HepG2 (cell line): ENCODE measurements at regions of chr16 and their contacts with region 1.

Region 1: DNA sequence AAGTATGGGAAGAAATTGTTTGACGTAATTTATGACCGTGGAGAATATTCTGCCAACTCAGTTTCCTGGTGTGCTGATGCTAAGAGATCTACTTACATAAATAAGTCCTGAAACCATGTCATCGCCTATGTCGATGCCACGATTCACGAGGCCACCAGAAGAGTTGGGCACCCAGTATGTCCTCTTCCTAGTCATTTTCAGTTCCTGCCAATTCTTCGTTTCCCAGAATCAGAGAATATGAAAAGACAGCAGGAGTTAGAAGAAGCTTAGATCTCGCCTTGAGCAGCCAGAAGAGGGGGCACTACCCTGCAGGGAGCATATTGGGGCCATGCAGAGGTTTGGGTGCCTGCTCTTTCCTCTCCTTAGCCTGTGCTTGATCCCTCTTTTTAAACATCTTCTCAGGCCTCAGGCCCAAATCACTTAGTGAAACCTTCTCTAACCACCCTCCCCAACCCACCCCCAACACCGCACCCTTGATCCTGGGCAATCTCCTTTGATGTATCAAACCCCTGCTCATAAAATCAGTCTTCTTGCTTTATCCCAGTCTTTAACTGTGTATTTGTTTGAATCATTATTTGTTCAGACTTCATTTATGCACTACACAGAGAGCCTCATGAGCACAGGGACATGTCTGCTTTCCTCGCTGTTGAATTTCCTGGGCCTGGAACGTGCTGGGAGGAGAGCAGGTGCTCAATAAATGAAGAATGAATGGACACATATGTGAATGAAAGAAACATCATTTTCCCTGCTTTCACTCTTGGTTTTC is 12.2 kb upstream of the LONP2 start:
- DNase-seq: peak; percentile 49
- ATAC-seq: peak; percentile 60
- H3K4me3 ChIP-seq: no peak overlapping the region
- H3K27ac ChIP-seq: no peak overlapping the region
- H3K4me1 ChIP-seq: peaks cover 65% of the 10 kb centered on the region
- H3K27me3 ChIP-seq: no peaks in the 10 kb centered on the region
- CTCF ChIP-seq: peak; percentile 76
- EP300 ChIP-seq: no peak
- POLR2A ChIP-seq: no peak
- RAD21 ChIP-seq: peak; percentile 76

Region 2: DNA sequence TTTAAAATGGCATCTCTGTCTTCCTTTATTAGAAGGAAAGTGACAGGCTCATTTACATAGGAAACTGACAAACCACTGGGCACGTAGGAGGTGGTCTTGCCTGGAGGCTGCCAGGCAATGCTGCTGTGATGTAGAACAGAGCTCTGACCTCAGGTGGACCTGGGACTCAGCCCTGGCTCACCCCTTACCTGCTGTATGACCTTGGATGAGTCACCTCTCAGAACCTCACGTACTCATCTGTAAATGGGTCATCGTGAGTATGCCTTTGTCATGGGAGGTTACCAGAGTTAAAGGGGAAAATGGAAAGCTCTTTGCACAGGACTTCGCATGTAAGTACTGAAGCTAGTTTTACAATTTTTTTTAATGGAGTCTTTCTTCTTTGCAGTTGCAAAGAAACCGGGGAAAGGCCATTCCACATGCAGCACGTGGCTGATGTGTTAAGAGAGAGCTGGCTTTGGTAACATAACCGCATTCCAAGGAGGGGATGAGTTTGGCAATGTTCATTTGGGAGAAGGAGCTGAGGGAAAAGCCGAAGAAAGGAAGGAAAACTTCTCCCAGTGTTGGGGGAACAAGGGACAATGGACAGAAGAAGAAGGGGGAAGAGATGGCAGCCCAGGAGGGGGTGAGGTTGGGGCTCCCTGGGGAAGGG is 25.2 kb before region 1 on chr16:
- CTCF ChIA-PET with region 1: no interaction called
- POLR2A ChIA-PET with region 1: interaction called, 36 read pairs
- in situ Hi-C with region 1: no loop called
- intact Hi-C with region 1: loop called (anchors 1 kb)
- DNase-seq: peak; percentile 69
- ATAC-seq: peak; percentile 2; the same call in 1 of the 3 replicates
- H3K4me3 ChIP-seq: no peak overlapping the region
- H3K27ac ChIP-seq: peak overlapping the region; percentile 89
- H3K4me1 ChIP-seq: peaks cover 67% of the 10 kb centered on the region
- H3K27me3 ChIP-seq: no peaks in the 10 kb centered on the region
- CTCF ChIP-seq: no peak
- EP300 ChIP-seq: peak in 1 of 2 experiments; percentile 59; a peak in 1 of 4 replicates
- POLR2A ChIP-seq: no peak
- RAD21 ChIP-seq: no peak

Region 3: GRCh38 chr16:48244080-48244862 is 12.4 kb after region 1 on chr16 and contains the start of gene LONP2:
- CTCF ChIA-PET with region 1: no interaction called
- POLR2A ChIA-PET with region 1: interaction called, 41 read pairs
- in situ Hi-C with region 1: no loop called
- intact Hi-C with region 1: loop called (anchors 1 kb)
- DNase-seq: peak; percentile 87
- ATAC-seq: peak; percentile 96
- H3K4me3 ChIP-seq: peak within 1 kb of the TSS; percentile 93 to 95 (median 93)
- H3K27ac ChIP-seq: peak within 1 kb of the TSS; percentile 85
- H3K4me1 ChIP-seq: peaks cover 34% of the 10 kb centered on the region
- H3K27me3 ChIP-seq: no peaks in the 10 kb centered on the region; a peak in 1 of 5 replicates
- CTCF ChIP-seq: peak; percentile 36
- EP300 ChIP-seq: peak; percentile 32 to 71; a peak in 3 of 4 replicates
- POLR2A ChIP-seq: peak; percentile 81 to 87
- RAD21 ChIP-seq: peak; percentile 20; the same call in 1 of the 2 replicates
- total RNA-seq, gene LONP2: 63.3 and 85.6 TPM in 2 replicates

Region 4: DNA sequence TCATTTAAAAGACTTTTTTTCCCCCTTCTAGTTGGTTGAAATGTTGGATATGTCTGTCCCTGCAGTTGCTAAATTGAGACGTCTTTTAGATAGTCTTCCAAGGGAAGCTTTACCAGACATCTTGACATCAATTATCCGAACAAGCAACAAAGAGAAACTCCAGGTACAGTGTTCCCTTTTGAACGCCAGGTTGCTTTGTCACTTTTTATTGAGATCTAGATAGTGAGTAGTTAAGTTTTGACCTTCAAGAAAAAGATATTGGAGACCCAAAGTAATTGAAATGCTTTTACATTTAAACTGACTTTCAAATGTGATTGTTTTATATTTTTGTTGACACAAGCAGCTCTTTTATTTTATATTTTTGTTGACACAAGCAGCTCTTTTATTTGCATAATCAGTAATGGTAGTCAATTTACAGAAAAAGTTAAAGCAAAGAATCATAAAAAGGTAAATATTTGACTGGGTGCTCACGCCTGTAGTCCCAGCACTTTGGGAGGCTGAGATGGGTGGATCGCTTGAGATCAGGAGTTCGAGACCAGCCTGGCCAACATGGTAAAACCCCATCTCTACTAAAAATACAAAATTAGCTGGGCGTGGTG is 24.8 kb after region 1 on chr16:
- CTCF ChIA-PET with region 1: interaction called, 19 read pairs
- POLR2A ChIA-PET with region 1: no interaction called
- in situ Hi-C with region 1: no loop called
- intact Hi-C with region 1: loop called (anchors 1 kb)
- DNase-seq: no peak
- ATAC-seq: no peak
- H3K4me3 ChIP-seq: no peak overlapping the region
- H3K27ac ChIP-seq: no peak overlapping the region
- H3K4me1 ChIP-seq: no peaks in the 10 kb centered on the region
- H3K27me3 ChIP-seq: no peaks in the 10 kb centered on the region
- CTCF ChIP-seq: no peak
- EP300 ChIP-seq: no peak
- POLR2A ChIP-seq: no peak
- RAD21 ChIP-seq: no peak